Activated T-helper 1 cell treated with anti-CD3 and anti-CD28 coated beads, Interleukin-12 subunit alpha, Interleukin-12 subunit beta, Interleukin-2, Interleukin-4 antibody, amounts not matched to agents 30 ng/mL and 10 ng/mL and 1 ng/mL, durations not matched to agents 14 hours and 24 hours and 36 hours (primary cell): ENCODE measurements at regions of chr16 and their contacts with region 1.

Region 1: DNA sequence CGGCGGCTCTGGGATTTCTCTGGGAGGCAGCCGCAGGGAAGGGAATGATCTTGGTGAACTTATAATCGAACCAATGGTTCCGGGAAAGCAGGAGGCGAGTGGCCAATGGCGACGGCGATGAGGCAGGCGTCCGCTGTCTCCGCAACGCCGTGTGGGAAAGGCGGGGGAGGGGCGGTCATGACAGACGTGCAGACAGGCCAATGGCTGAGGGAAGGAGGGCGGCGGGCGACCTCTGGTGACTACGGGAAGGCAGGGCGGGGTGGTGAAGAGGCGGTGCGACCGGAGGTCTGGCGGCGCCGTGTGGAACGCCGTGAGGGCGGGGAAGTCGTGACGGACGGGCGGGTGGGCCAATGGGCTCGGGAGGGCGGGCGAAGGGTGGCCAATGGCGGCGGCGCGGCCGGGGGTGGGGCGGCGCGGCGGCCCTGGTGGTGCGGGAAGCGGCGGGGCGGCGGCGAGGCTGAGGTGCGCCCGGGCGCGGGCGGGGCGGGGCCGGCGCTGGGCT is at the start of gene RAB40C:
- DNase-seq: peak; percentile 97
- H3K4me3 Mint-ChIP-seq: peak within 1 kb of the TSS; percentile 97
- H3K27ac Mint-ChIP-seq: peak within 1 kb of the TSS; percentile 100
- H3K4me1 Mint-ChIP-seq: peaks cover 26% of the 10 kb centered on the region
- H3K27me3 Mint-ChIP-seq: no peaks in the 10 kb centered on the region
- total RNA-seq, gene RAB40C: 14.0 and 15.2 TPM in 2 replicates

Region 2: GRCh38 chr16:352547-353403 is 236.9 kb before region 1 on chr16 and contains the start of gene AXIN1:
- intact Hi-C with region 1: loop called (anchors 2 kb)
- DNase-seq: peak; percentile 97
- H3K4me3 Mint-ChIP-seq: peak within 1 kb of the TSS; percentile 92
- H3K27ac Mint-ChIP-seq: peak within 1 kb of the TSS; percentile 87
- H3K4me1 Mint-ChIP-seq: peaks cover 8% of the 10 kb centered on the region
- H3K27me3 Mint-ChIP-seq: peaks cover 4% of the 10 kb centered on the region
- total RNA-seq, gene AXIN1: 28.1 and 30.3 TPM in 2 replicates

Region 3: DNA sequence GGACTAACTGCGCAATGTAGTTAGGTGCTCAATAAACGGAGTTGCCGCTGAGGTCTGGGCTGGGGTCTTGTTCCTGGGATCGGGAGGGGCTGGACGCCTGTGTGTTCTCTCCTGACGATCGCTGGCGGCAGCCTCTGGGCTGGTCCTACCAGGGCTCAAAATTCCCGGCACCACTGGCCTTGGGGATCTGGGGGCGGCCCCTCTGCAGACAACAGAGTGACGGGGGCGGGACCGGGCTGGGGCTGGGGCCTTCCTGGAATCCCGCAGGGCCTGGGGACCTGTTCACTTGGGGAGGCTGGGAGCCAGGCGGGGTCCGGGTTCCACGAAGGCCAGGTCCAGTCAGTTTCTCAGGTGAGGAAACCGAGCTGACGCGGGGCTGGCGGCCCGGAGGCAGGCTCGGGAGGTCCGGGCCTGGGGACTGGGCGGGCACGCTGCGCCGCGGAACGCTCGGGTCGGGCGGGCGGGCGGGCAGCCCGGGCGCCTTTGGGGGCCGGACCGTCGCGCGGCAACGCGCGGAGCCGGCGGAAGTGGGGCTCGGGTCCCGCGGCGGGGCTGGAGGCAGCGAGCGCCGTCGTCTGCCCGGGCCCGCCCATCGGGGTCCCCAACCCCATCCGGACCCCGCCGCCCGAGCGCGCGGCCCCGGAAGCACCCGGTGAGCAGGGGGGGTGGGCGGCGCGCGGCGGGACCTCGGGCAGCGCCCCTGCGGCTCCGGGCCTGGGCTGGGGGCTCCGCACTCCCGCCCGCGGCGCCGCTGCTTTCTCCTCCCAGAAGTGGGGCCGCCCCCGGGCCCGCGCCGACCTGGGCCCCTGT is 20.1 kb before region 1 on chr16 and contains the start of gene PIGQ:
- intact Hi-C with region 1: loop called (anchors 1 kb)
- DNase-seq: peak; percentile 65
- H3K4me3 Mint-ChIP-seq: peak within 1 kb of the TSS; percentile 85
- H3K27ac Mint-ChIP-seq: peak within 1 kb of the TSS; percentile 89
- H3K4me1 Mint-ChIP-seq: peaks cover 32% of the 10 kb centered on the region
- H3K27me3 Mint-ChIP-seq: no peaks in the 10 kb centered on the region
- total RNA-seq, gene PIGQ: 50.1 and 52.6 TPM in 2 replicates

Region 4: GRCh38 chr16:684067-684794 is 94.5 kb after region 1 on chr16 and contains the start of gene JMJD8:
- intact Hi-C with region 1: loop called (anchors 1 kb)
- DNase-seq: peak; percentile 97
- H3K4me3 Mint-ChIP-seq: peak within 1 kb of the TSS; percentile 83
- H3K27ac Mint-ChIP-seq: peak within 1 kb of the TSS; percentile 58
- H3K4me1 Mint-ChIP-seq: peaks cover 5% of the 10 kb centered on the region
- H3K27me3 Mint-ChIP-seq: no peaks in the 10 kb centered on the region
- total RNA-seq, gene JMJD8: 63.4 and 71.4 TPM in 2 replicates